Ovary (tissue), 10 donors: ENCODE measurements at regions of chr17 and their contacts with region 1.

Region 1: GRCh38 chr17:40062329-40063186 is at the start of gene THRA:
- DNase-seq: peak; percentile 78 to 83 (median 79)
- H3K4me3 ChIP-seq: peak within 1 kb of the TSS; percentile 63
- H3K27ac ChIP-seq: peak within 1 kb of the TSS; percentile 80 to 85
- H3K4me1 ChIP-seq: peaks cover 15% of the 10 kb centered on the region
- H3K27me3 ChIP-seq: no peaks in the 10 kb centered on the region
- CTCF ChIP-seq: peak in 1 of 3 donors; percentile 13
- EP300 ChIP-seq: no peak
- POLR2A ChIP-seq: peak; percentile 35
- total RNA-seq, gene THRA: 51.4 to 129 (median 89.3) TPM

Region 2: GRCh38 chr17:39225959-39226683 is 836.4 kb before region 1 on chr17:
- intact Hi-C with region 1: loop called in 1 of 4 experiments (anchors 10 kb)
- DNase-seq: peak; percentile 78 to 89 (median 82)
- H3K4me3 ChIP-seq: peak overlapping the region; percentile 42
- H3K27ac ChIP-seq: no peak overlapping the region
- H3K4me1 ChIP-seq: peaks cover 2% of the 10 kb centered on the region
- H3K27me3 ChIP-seq: no peaks in the 10 kb centered on the region
- CTCF ChIP-seq: no peak
- EP300 ChIP-seq: no peak
- POLR2A ChIP-seq: no peak

Region 3: GRCh38 chr17:40098846-40099618 is 36.5 kb after region 1 on chr17:
- intact Hi-C with region 1: loop called in 1 of 4 experiments (anchors 5 kb)
- DNase-seq: peak; percentile 100
- H3K4me3 ChIP-seq: peak overlapping the region; percentile 65
- H3K27ac ChIP-seq: peak overlapping the region; percentile 89 to 96
- H3K4me1 ChIP-seq: peaks cover 31% of the 10 kb centered on the region
- H3K27me3 ChIP-seq: no peaks in the 10 kb centered on the region
- CTCF ChIP-seq: no peak
- EP300 ChIP-seq: peak; percentile 97
- POLR2A ChIP-seq: peak; percentile 94

Region 4: DNA sequence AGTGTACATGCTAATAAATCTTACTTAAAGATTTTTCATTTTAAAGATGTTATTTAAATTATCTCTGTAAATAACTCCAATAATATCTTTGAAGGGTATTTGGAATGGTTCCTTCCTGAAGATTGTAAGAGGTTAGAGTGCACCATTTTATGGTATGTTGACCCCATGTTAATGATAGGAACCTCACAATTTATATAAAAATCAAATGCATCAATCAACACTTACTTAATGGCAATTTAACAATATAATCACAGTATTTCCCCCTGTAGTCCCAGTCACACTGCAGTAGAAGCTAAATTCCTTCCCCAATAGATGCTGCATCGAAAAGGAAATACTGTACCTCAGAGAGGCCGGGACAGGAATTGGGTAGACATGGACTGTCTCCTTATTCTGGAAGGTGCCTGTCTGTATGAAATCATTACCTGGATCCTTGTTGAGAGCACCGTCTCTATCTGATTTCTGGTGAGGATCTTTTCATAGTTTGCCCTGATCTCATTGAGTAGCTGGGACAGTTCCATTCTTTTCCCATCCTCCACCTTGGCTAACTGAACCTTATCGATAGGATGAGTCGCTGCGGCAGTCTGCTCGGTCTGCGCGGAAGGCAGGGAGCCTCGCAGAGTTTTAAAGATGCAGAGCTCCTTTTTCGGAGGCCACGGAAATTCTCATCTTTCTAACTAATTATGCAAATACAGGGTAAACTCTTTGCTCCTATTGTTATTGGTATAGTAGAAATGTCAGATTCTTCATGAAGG is 602.2 kb after region 1 on chr17 and contains the start of gene KRT222:
- intact Hi-C with region 1: no loop called
- DNase-seq: no peak
- H3K4me3 ChIP-seq: no peak within 1 kb of the TSS
- H3K27ac ChIP-seq: no peak within 1 kb of the TSS
- H3K4me1 ChIP-seq: no peaks in the 10 kb centered on the region
- H3K27me3 ChIP-seq: no peaks in the 10 kb centered on the region
- CTCF ChIP-seq: no peak
- EP300 ChIP-seq: no peak
- POLR2A ChIP-seq: no peak
- total RNA-seq, gene KRT222: 0.20 to 0.57 (median 0.39) TPM in 4 of 7 donors, not detected in the others